H1 (cell line): ENCODE measurements at regions of chr11 and their contacts with region 1.

Region 1: GRCh38 chr11:104164028-104164520 is at the start of gene PDGFD:
- DNase-seq: peak; percentile 76 to 85
- H3K4me3 ChIP-seq: peak within 1 kb of the TSS; percentile 67 to 89 (median 78)
- H3K27ac ChIP-seq: no peak within 1 kb of the TSS
- H3K4me1 ChIP-seq: peaks cover 0 to 8% (median 3%) of the 10 kb centered on the region in 4 experiments; a peak in 5 of 7 replicates
- H3K27me3 ChIP-seq: no peaks in the 10 kb centered on the region; a peak in 1 of 7 replicates
- CTCF ChIP-seq: peak; percentile 53 to 66 (median 58)
- EP300 ChIP-seq: no peak
- POLR2A ChIP-seq: peak in 1 of 2 experiments; percentile 67; a peak in 1 of 3 replicates
- RAD21 ChIP-seq: peak in 1 of 2 experiments; percentile 41; a peak in 3 of 4 replicates
- total RNA-seq, gene PDGFD: 3.8 and 3.9 TPM in 2 replicates

Region 2: GRCh38 chr11:104118105-104118744 is 45.8 kb before region 1 on chr11:
- CTCF ChIA-PET with region 1: no interaction called
- POLR2A ChIA-PET with region 1: no interaction called
- DNase-seq: no peak
- H3K4me3 ChIP-seq: no peak overlapping the region
- H3K27ac ChIP-seq: no peak overlapping the region
- H3K4me1 ChIP-seq: peaks cover 0 to 5% (median 3%) of the 10 kb centered on the region in 4 experiments; a peak in 2 of 7 replicates
- H3K27me3 ChIP-seq: no peaks in the 10 kb centered on the region
- CTCF ChIP-seq: no peak
- EP300 ChIP-seq: no peak
- POLR2A ChIP-seq: no peak
- RAD21 ChIP-seq: no peak

Region 3: DNA sequence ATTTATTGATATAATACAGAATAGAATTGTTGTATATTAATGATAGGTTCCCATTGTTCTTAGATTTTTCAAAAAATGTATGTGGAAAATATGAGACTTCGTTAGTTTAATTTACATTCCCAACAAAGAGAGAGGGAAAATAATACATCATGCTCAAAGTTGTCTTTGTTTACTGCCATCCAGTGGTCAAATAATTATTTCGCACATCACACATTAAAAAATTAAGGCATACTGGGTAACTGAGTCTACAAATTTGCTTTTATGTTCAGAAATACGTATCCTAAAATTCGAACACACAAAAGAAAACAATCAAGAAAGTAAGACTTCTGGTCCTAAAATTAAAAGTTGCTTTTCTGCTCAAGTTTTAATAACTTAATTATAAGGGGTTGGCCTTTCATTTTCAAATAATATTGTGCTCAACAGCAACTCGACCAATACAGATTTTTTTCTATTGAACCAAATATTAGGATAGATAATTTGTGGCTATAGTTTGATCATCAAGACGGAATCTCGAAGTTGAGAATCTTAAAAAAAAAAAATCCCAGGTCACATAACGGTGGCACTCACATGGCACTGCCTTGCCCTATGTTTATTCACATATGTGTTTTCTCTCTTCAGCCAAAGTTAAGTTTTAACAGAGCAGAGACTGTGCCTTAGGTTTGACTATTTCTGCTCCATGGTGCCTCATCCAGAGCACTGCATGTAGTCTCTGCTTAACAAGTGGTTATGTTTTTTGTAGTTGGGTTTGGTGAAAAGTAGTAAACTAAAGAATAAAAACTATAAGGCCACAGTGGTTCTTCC is 12.5 kb before region 1 on chr11:
- CTCF ChIA-PET with region 1: interaction called, 11 read pairs
- POLR2A ChIA-PET with region 1: no interaction called
- DNase-seq: no peak
- H3K4me3 ChIP-seq: no peak overlapping the region
- H3K27ac ChIP-seq: no peak overlapping the region
- H3K4me1 ChIP-seq: 0 out of 7 replicates have a peak, but pooled peaks cover 0 to 3% (median 0%) of the 10 kb centered on the region in 4 experiments
- H3K27me3 ChIP-seq: no peaks in the 10 kb centered on the region
- CTCF ChIP-seq: peak in 1 of 3 experiments; percentile 33; a peak in 1 of 4 replicates
- EP300 ChIP-seq: no peak
- POLR2A ChIP-seq: no peak
- RAD21 ChIP-seq: peak in 1 of 2 experiments; percentile 16; a peak in 2 of 4 replicates

Region 4: GRCh38 chr11:104191124-104191523 is 27.1 kb after region 1 on chr11:
- CTCF ChIA-PET with region 1: interaction called, 10 read pairs
- POLR2A ChIA-PET with region 1: no interaction called
- DNase-seq: no peak
- H3K4me3 ChIP-seq: no peak overlapping the region
- H3K27ac ChIP-seq: no peak overlapping the region
- H3K4me1 ChIP-seq: no peaks in the 10 kb centered on the region
- H3K27me3 ChIP-seq: no peaks in the 10 kb centered on the region
- CTCF ChIP-seq: no peak
- EP300 ChIP-seq: no peak
- POLR2A ChIP-seq: no peak
- RAD21 ChIP-seq: no peak